CD4-positive, alpha-beta memory T cell (primary cell): ENCODE measurements at regions of chr19 and their contacts with region 1.

Region 1: GRCh38 chr19:14366498-14366915 is 14.7 kb upstream of the ADGRE5 start:
- DNase-seq: peak; percentile 92 to 96 (median 94)
- H3K4me3 ChIP-seq: peak overlapping the region in 1 of 2 donors; percentile 54
- H3K4me3 Mint-ChIP-seq: peak overlapping the region; percentile 55 to 92 (median 80)
- H3K27ac ChIP-seq: peak overlapping the region; percentile 100
- H3K27ac Mint-ChIP-seq: peak overlapping the region; percentile 89 to 100 (median 97)
- H3K4me1 ChIP-seq: peaks cover 92% of the 10 kb centered on the region
- H3K4me1 Mint-ChIP-seq: peaks cover 42 to 76% (median 58%) of the 10 kb centered on the region in 4 donors
- H3K27me3 ChIP-seq: no peaks in the 10 kb centered on the region
- H3K27me3 Mint-ChIP-seq: no peaks in the 10 kb centered on the region

Region 2: DNA sequence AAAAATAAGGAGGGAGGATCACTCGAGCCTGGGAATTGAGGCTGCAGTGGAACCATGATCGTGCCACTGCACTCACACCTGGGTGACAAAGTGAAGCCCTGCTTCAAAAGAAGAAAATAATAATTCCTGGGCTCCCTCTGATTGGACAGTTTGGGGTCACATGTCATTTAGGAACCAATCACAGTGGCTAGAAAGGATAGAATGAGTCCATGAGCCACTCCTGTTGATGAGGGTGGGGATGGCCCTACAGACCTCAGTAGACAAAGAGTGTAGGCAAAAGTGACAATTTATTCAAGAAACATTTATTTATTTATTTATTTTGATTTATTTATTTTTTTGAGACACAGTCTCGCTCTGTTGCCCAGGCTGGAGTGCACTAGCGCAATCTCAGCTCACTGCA is 12.1 kb before region 1 on chr19:
- CTCF ChIA-PET with region 1: interaction called, 85 read pairs
- POLR2A ChIA-PET with region 1: interaction called, 79 read pairs
- intact Hi-C with region 1: no loop called
- DNase-seq: no peak
- H3K4me3 ChIP-seq: no peak overlapping the region
- H3K4me3 Mint-ChIP-seq: peak overlapping the region in 1 of 8 donors; percentile 15
- H3K27ac ChIP-seq: peak overlapping the region; percentile 61
- H3K27ac Mint-ChIP-seq: peak overlapping the region in 5 of 7 donors; percentile 35 to 99 (median 93)
- H3K4me1 ChIP-seq: peaks cover 55% of the 10 kb centered on the region
- H3K4me1 Mint-ChIP-seq: peaks cover 22 to 39% (median 29%) of the 10 kb centered on the region in 4 donors
- H3K27me3 ChIP-seq: no peaks in the 10 kb centered on the region
- H3K27me3 Mint-ChIP-seq: no peaks in the 10 kb centered on the region

Region 3: GRCh38 chr19:14383661-14384555 is 17.4 kb after region 1 on chr19:
- CTCF ChIA-PET with region 1: interaction called, 213 read pairs
- POLR2A ChIA-PET with region 1: interaction called, 585 read pairs
- intact Hi-C with region 1: loop called (anchors 1 kb)
- DNase-seq: peak in 3 of 5 donors; percentile 40 to 91 (median 41)
- H3K4me3 ChIP-seq: peak overlapping the region; percentile 40 to 82
- H3K4me3 Mint-ChIP-seq: peak overlapping the region; percentile 91 to 99 (median 98)
- H3K27ac ChIP-seq: peak overlapping the region; percentile 99
- H3K27ac Mint-ChIP-seq: peak overlapping the region; percentile 96 to 100 (median 98)
- H3K4me1 ChIP-seq: peaks cover 41% of the 10 kb centered on the region
- H3K4me1 Mint-ChIP-seq: peaks cover 19 to 66% (median 37%) of the 10 kb centered on the region in 4 donors
- H3K27me3 ChIP-seq: no peaks in the 10 kb centered on the region
- H3K27me3 Mint-ChIP-seq: peaks cover 0 to 4% of the 10 kb centered on the region in 2 donors

Region 4: DNA sequence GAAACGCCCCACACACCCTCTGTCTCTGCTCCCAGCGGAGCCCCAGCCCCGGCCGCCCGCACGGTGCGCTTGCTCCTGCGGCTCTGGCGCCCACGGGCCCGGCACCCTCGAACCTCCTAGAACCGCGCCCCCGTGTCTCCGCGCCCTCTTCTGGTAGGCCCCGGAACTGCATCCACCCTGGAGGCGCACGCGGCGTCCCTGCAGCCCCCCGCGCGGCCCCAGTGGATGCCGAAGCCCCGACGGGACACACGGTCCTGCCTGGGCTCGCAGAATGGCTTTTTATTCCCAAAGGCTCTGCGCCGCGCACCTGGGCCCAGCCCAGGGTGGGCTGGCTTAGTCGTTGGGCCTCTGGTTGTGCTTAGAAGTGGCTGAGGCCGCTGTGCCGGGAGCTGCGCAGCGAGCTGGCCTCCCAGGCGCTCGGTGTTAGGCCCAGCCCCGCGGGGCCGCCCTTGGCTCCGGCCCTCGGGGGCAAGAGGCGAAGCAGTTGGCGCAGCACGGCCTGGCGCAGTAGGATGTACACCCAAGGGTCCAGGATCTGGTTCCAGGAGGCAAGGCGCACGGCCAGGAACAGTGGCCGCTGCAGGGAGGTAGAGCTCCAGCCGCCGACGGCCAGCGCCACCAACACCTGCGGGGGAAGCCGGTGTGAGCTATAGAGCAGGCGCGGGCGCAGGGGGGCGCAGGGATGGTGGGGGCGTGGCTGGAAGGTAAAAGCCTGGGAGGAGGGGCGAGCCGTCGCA is 105.9 kb after region 1 on chr19:
- CTCF ChIA-PET with region 1: interaction called, 4 read pairs
- POLR2A ChIA-PET with region 1: no interaction called
- intact Hi-C with region 1: loop called (anchors 1 kb)
- DNase-seq: peak; percentile 78 to 84 (median 79)
- H3K4me3 ChIP-seq: peak overlapping the region in 1 of 2 donors; percentile 19
- H3K4me3 Mint-ChIP-seq: peak overlapping the region in 7 of 8 donors; percentile 25 to 76 (median 61)
- H3K27ac ChIP-seq: no peak overlapping the region
- H3K27ac Mint-ChIP-seq: no peak overlapping the region
- H3K4me1 ChIP-seq: peaks cover 36% of the 10 kb centered on the region
- H3K4me1 Mint-ChIP-seq: peaks cover 14 to 35% (median 25%) of the 10 kb centered on the region in 4 donors
- H3K27me3 ChIP-seq: peaks cover 14% of the 10 kb centered on the region
- H3K27me3 Mint-ChIP-seq: peaks cover 7 to 20% of the 10 kb centered on the region in 2 donors